ENCODE measurements at regions of chr5 and their contacts with region 1.

Region 1: DNA sequence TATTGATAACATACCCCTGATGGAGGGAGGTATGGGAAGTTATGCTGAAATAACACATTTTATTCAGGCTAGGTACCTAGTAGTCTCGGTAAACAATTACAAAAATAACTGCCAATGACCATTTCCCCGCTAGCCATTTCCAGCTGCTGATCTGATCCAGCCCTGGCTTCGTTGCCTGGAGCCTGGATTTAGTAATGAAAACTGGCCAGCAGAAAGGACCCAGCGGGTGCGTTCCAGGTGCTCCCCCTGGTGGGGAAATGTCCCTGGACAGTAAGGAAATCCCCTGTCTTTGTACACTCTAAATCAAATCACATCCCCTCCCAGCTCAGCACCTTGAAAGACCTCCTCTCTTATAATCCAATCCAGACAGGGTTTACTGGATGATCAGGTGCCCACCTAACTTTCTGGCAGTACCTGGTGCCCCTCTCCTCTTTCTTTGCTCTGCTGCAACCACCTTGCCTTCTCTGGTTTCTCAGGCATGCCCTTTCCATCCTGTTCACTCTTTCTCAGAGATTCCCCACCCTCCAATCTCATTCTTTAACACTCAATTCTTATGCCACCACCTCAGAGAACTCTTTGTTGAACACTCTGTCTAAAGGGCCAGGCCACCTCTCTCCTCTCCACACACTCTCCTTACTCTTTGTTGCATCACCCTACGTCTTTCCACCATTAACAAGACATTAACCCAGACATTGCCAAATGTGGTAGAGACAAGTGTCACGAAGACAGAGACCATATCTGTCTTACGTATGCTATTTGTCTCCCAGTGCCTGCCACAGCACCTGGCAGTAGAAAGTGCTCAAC is 50.1 kb upstream of the SMAD5 start:
- DNase-seq: peak; percentile 52
- ATAC-seq: no peak
- H3K4me3 ChIP-seq: no peak overlapping the region
- H3K4me3 Mint-ChIP-seq: no peak overlapping the region
- H3K27ac ChIP-seq: no peak overlapping the region
- H3K27ac Mint-ChIP-seq: no peak overlapping the region
- H3K4me1 ChIP-seq: peaks cover 4 to 17% of the 10 kb centered on the region in 2 donors
- H3K4me1 Mint-ChIP-seq: peaks cover 8% of the 10 kb centered on the region
- H3K27me3 ChIP-seq: peaks cover 0 to 50% (median 17%) of the 10 kb centered on the region in 4 experiments
- H3K27me3 Mint-ChIP-seq: peaks cover 28% of the 10 kb centered on the region
- CTCF ChIP-seq: peak; percentile 45

Region 2: DNA sequence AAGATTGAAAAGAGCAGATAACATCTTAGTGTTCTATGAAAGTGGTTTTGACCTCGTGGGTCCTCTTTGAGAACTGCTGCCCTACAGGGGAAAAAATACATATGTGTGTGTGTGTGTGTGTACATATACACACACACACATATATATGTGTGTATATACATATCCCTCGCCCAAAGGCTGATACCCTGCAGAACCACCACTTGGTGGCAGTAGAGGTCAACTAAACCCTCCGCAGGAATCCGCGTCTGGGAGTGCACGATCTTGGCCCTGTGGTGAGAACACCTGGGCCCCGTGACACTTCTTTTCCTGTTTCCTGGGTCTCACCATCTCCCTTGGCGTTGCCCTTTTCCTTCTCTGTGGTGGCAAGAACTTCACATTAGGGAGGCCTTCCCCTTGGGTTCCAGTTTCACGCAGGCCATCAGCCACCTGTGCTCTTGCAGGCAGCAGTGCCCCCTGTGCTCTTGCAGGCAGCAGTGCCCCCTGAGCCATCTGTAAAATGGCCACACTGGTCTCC is 195.2 kb before region 1 on chr5:
- CTCF ChIA-PET with region 1: interaction called, 3 read pairs
- POLR2A ChIA-PET with region 1: no interaction called
- intact Hi-C with region 1: loop called (anchors 2 kb)
- DNase-seq: peak; percentile 67
- ATAC-seq: peak; percentile 75
- H3K4me3 ChIP-seq: no peak overlapping the region
- H3K4me3 Mint-ChIP-seq: peak overlapping the region; percentile 66
- H3K27ac ChIP-seq: no peak overlapping the region
- H3K27ac Mint-ChIP-seq: no peak overlapping the region
- H3K4me1 ChIP-seq: peaks cover 0 to 5% of the 10 kb centered on the region in 2 donors
- H3K4me1 Mint-ChIP-seq: peaks cover 5% of the 10 kb centered on the region
- H3K27me3 ChIP-seq: no peaks in the 10 kb centered on the region
- H3K27me3 Mint-ChIP-seq: peaks cover 13% of the 10 kb centered on the region
- CTCF ChIP-seq: peak; percentile 81

Region 3: DNA sequence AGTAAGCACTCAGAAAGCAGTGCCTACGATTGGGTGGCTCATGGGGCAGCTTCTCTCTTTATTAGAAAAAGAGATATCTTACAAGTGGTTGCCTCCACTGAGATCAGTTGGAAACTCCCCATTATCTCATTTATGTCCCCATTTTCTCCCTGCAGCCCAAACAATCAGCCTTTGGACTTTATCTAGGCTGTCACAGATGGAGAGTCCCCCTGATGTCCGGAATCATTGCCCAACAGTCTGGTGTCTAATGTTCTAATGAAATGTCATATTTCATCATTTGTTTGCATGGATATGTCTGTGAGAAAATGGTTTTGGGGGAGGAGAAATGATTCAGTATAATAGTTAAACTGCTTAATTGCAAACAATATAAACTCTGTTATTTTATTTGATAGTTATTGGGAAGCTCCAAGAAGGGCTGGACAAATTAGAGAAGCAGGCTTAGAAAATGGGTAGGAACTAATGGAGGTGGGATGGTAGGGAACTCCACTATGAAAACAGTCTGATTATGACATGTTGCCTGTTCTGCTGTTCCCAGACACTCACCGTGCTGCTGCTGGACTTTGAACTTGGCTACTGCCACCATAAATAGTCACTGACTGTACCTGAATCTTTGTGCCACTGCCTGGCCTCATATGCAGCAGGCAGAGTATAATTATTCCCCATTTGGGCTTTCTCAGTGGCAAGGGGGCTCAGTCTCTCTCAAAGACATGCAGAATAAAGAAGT is 11.8 kb after region 1 on chr5:
- CTCF ChIA-PET with region 1: no interaction called
- POLR2A ChIA-PET with region 1: no interaction called
- intact Hi-C with region 1: no loop called
- DNase-seq: no peak
- ATAC-seq: no peak
- H3K4me3 ChIP-seq: no peak overlapping the region
- H3K4me3 Mint-ChIP-seq: no peak overlapping the region
- H3K27ac ChIP-seq: no peak overlapping the region
- H3K27ac Mint-ChIP-seq: no peak overlapping the region
- H3K4me1 ChIP-seq: no peaks in the 10 kb centered on the region
- H3K4me1 Mint-ChIP-seq: no peaks in the 10 kb centered on the region
- H3K27me3 ChIP-seq: peaks cover 0 to 4% (median 0%) of the 10 kb centered on the region in 4 experiments
- H3K27me3 Mint-ChIP-seq: peaks cover 24% of the 10 kb centered on the region
- CTCF ChIP-seq: no peak